Esophagus muscularis mucosa (tissue), 4 donors: ENCODE measurements at regions of chr20 and their contacts with region 1.

Region 1: DNA sequence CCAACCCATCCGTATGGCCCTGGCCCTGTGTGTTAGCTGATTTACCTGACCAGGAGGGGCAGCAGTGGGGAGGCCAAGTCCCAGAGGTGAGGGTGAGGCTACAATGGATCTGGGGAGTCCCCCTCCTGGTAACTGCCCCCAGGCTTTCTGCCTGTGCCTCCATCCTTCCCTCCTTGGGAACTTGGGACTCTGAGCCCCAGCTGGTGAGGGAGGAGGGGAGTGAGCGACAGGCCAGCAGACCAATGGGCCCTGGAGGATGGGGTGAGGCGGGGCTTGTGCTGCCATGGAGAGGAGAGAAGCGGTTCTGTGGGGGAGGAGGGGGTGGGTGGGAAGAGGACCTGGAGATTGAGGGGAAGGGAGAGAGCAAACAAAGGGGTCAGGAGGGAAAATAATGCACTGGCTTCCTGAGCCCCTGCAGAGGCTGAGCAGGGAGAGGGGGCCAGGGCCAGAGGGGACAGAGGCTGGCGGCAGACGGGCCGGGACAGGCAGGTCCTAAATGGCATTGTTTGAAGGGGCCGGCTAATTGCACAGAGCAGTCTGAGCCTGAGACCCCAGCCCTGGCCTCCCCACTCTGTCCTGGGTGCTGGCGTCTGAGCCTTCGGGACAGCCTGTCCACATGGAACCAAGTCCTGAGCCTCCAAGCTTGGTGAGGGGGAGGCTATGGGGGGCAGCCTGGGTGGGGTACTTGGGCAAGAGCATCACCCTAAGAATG is 17.5 kb downstream of the DNMT3B start:
- DNase-seq: no peak
- H3K4me3 ChIP-seq: no peak overlapping the region
- H3K27ac ChIP-seq: no peak overlapping the region
- H3K4me1 ChIP-seq: peaks cover 0 to 9% (median 4%) of the 10 kb centered on the region in 4 donors
- H3K27me3 ChIP-seq: no peaks in the 10 kb centered on the region
- CTCF ChIP-seq: no peak
- EP300 ChIP-seq: no peak
- POLR2A ChIP-seq: no peak

Region 2: DNA sequence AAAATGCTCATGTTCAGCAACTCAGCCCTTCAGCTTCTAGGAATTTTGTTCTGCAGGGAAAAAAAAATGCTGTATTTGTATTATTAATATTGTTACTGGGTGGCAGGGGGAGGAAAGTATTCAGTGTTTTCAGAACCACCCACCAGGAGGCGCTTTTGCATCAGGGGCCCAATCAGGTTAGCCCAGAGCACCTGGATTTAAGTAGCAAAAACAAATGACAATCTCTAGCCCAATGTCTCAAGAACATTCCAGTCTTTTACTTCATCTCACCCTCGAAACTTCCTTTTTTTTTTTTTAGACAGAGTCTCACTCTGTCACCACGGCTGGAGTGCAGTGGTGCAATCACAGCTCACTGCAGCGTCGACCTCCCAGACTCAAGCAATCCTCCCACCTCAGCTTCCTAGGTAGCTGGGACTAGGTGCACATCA is 105.3 kb before region 1 on chr20:
- intact Hi-C with region 1: loop called (anchors 5 kb)
- DNase-seq: no peak
- H3K4me3 ChIP-seq: no peak overlapping the region
- H3K27ac ChIP-seq: no peak overlapping the region
- H3K4me1 ChIP-seq: peaks cover 0 to 7% (median 2%) of the 10 kb centered on the region in 4 donors
- H3K27me3 ChIP-seq: no peaks in the 10 kb centered on the region
- CTCF ChIP-seq: peak; percentile 38 to 55 (median 39)
- EP300 ChIP-seq: no peak
- POLR2A ChIP-seq: no peak

Region 3: GRCh38 chr20:32855387-32855786 is 75.7 kb after region 1 on chr20:
- intact Hi-C with region 1: no loop called
- DNase-seq: no peak
- H3K4me3 ChIP-seq: no peak overlapping the region
- H3K27ac ChIP-seq: no peak overlapping the region
- H3K4me1 ChIP-seq: no peaks in the 10 kb centered on the region
- H3K27me3 ChIP-seq: no peaks in the 10 kb centered on the region
- CTCF ChIP-seq: no peak
- EP300 ChIP-seq: no peak
- POLR2A ChIP-seq: no peak